ENCODE measurements at regions of chr10 and their contacts with region 1.

Region 1: GRCh38 chr10:92880233-92880861 is 32.0 kb downstream of the EXOC6 start:
- DNase-seq: peak in 2 of 4 experiments; percentile 14 to 47
- ATAC-seq: peak; percentile 81
- H3K4me3 ChIP-seq: no peak overlapping the region
- H3K27ac ChIP-seq: no peak overlapping the region
- H3K4me1 ChIP-seq: peaks cover 0 to 16% of the 10 kb centered on the region in 2 experiments; a peak in 3 of 5 replicates
- H3K27me3 ChIP-seq: no peaks in the 10 kb centered on the region
- CTCF ChIP-seq: peak; percentile 30 to 55 (median 30); a peak in 3 of 6 replicates
- EP300 ChIP-seq: no peak
- POLR2A ChIP-seq: no peak
- RAD21 ChIP-seq: peak; percentile 51 to 56; a peak in 3 of 4 replicates

Region 2: DNA sequence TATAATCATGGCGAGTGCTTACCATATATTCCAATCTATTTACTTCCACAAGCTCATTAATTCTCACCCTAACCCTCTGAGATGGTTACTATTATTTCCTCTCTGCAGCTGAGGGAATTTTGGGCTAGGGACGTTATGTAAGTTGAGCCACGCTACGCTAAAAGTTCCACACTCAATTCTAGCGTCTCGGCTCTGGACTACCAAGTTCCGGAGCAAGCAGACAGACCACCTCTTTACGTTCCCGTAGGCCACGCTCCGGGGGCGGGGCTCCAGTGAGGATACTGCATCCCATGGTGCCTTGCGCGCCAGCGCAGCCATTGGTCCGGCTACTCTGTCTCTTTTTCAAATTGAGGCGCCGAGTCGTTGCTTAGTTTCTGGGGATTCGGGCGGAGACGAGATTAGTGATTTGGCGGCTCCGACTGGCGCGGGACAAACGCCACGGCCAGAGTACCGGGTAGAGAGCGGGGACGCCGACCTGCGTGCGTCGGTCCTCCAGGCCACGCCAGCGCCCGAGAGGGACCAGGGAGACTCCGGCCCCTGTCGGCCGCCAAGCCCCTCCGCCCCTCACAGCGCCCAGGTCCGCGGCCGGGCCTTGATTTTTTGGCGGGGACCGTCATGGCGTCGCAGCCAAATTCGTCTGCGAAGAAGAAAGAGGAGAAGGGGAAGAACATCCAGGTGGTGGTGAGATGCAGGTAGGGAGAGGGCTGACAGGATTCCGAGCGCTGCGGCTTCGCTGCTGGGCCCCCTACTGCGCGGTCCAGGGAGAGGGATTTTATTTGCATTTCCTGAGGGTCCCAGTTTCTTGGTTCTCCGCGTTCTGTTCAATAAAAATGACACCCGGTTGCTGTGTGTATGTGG is 287.4 kb before region 1 on chr10 and contains the start of gene KIF11:
- CTCF ChIA-PET with region 1: interaction called, 3 read pairs
- POLR2A ChIA-PET with region 1: no interaction called
- in situ Hi-C with region 1: no loop called
- intact Hi-C with region 1: loop called (anchors 5 kb)
- DNase-seq: peak; percentile 80 to 97 (median 86)
- ATAC-seq: peak; percentile 80
- H3K4me3 ChIP-seq: peak within 1 kb of the TSS; percentile 64
- H3K27ac ChIP-seq: peak within 1 kb of the TSS; percentile 89
- H3K4me1 ChIP-seq: peaks cover 10 to 18% of the 10 kb centered on the region in 2 experiments; a peak in 4 of 5 replicates
- H3K27me3 ChIP-seq: no peaks in the 10 kb centered on the region
- CTCF ChIP-seq: peak in 1 of 3 experiments; percentile 16; a peak in 1 of 6 replicates
- EP300 ChIP-seq: peak; percentile 8; the same call in 1 of the 2 replicates
- POLR2A ChIP-seq: peak; percentile 95
- RAD21 ChIP-seq: no peak
- polyA plus RNA-seq, gene KIF11: 11.3 to 12.3 TPM

Region 3: DNA sequence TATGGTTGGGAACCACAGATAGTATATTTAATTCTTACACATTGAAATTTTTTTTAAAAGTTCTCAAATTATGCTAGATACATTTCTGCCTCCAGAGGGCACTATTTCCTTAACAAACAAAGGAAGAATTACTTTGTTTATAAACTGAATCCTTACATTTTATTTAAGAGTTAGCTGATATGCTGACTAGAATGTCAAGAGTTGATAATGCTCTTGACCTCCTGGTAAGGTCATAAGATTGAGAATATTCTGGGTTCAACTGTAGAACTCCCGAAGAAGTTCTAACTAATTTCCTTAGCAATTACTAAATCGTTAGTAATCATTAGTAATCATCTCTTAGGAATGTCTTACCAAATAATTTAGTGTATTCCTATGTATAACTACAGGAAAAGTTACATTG is 85.0 kb after region 1 on chr10:
- CTCF ChIA-PET with region 1: no interaction called
- POLR2A ChIA-PET with region 1: no interaction called
- in situ Hi-C with region 1: no loop called
- intact Hi-C with region 1: loop called (anchors 10 kb)
- DNase-seq: peak; percentile 5 to 51 (median 9)
- ATAC-seq: no peak
- H3K4me3 ChIP-seq: no peak overlapping the region
- H3K27ac ChIP-seq: no peak overlapping the region
- H3K4me1 ChIP-seq: no peaks in the 10 kb centered on the region; a peak in 1 of 5 replicates
- H3K27me3 ChIP-seq: no peaks in the 10 kb centered on the region
- CTCF ChIP-seq: peak; percentile 27 to 65 (median 32); a peak in 3 of 6 replicates
- EP300 ChIP-seq: no peak
- POLR2A ChIP-seq: no peak
- RAD21 ChIP-seq: peak; percentile 21 to 66; a peak in 3 of 4 replicates

Region 4: DNA sequence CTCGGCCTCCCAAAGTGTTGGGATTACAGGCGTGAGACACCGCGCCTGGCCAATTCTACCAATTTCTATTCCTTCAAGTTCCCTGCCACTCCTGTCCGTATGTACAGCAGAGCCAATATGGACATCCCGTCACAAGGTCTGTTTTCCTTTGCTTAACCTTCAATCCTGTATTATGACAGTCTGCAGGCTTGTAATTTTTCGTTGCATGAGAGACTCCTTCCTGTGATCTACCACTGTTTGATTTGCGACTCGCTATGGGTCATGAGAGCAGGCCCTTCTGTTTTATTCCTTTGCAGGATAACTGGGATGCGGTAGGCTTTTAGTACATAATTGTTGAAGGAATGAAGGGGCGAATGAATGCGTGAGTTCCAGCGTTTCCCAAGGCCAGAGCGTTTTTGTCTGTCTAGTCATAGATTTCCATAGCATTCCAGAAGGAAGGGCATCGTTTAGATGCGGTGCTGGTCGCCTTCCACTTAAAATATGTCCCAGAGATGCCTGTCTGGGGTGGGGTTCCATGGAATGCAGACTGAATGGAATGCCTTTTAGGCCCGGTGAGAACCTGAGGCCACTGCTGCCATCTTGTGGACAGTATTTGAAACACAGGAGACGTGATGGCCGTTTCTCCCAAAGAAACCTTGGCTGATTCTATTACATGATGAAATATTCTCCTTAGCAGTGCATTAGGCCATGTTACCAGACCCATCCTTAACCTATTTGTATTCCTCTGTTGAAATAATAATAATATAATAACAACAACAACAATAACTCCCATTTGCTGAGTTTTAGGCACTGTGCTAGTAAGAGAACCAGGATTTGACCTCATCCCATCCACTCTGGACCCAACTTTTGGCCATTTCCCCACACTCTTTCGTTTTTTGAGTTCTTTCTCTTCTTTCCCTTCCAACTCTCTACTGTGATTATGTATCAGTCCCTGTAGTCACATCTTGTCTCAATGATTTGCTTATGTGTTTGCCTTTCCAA is 408.6 kb after region 1 on chr10:
- CTCF ChIA-PET with region 1: no interaction called
- POLR2A ChIA-PET with region 1: no interaction called
- in situ Hi-C with region 1: no loop called
- intact Hi-C with region 1: loop called (anchors 10 kb)
- DNase-seq: peak; percentile 66 to 72 (median 70)
- ATAC-seq: peak; percentile 79
- H3K4me3 ChIP-seq: no peak overlapping the region
- H3K27ac ChIP-seq: no peak overlapping the region
- H3K4me1 ChIP-seq: no peaks in the 10 kb centered on the region; a peak in 1 of 5 replicates
- H3K27me3 ChIP-seq: peaks cover 2 to 14% of the 10 kb centered on the region in 2 experiments; a peak in 3 of 5 replicates
- CTCF ChIP-seq: peak; percentile 61 to 84 (median 72)
- EP300 ChIP-seq: no peak
- POLR2A ChIP-seq: no peak
- RAD21 ChIP-seq: peak; percentile 71 to 85